ENCODE measurements at regions of chr14 and their contacts with region 1.

Region 1: DNA sequence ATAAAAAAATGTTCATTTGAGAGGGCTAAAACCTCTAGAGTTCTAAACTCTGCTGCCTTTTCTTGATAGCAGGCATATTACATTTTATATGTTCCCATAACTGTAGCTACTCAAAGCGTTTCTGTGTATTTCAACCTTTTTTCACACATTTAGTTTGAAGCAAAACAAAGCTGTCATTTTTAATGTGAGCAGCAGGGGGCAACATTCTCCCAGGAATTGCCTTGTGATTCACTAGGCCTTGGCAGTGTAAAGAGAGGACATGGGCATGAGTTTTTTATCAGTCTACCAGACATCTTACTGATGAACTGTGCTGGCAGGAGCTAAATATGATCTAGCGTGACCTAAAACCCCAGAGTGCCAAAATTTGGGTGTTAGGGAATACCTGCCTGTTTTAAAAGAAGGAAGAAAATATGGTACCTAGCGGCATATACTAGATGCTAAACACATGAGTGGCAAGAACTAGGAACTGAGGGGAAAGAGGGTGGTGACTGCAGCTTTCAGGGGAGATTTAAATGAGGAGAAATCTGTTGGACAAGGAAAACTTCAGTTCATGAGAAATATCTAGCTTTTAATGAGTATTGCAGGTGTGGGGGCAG is 65.3 kb downstream of the IFT43 start:
- DNase-seq: peak in 1 of 3 donors; percentile 75
- ATAC-seq: peak; percentile 65
- H3K4me3 ChIP-seq: no peak overlapping the region
- H3K4me1 ChIP-seq: no peaks in the 10 kb centered on the region
- CTCF ChIP-seq: peak; percentile 31

Region 2: DNA sequence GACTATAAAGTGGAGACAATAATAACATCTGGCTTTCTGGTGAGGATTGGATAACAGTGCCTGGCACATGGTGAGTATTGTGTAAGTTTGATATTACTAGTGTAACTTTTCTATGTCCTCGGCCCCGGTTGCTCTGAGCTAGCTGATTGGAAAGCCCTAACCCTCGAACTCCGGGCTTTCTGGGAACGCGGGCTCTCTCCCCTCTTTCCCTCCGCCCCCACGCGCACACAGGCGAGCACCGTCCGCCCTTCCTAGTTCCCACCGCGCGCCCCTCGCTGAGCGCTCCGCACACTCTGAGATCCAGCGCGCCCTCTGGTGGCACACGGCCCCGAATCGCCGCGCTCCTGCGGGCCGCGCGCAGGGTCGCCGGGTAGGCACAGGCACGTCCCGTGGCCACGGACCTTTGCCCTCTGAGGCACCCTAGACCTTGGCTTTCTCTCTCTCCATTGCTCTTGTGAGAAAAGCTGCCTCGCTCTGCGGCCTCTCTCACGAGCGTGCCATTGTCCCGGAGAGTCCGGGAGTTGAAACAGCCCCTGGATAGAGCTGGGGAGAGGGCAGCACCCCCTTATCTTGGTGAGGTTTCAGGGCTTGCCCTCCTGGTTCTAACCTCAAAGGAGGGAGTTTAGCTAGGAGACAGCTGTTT is 301.9 kb after region 1 on chr14:
- intact Hi-C with region 1: loop called (anchors 10 kb)
- DNase-seq: peak in 2 of 3 donors; percentile 55 to 63
- ATAC-seq: peak; percentile 67
- H3K4me3 ChIP-seq: no peak overlapping the region
- H3K4me1 ChIP-seq: no peaks in the 10 kb centered on the region
- CTCF ChIP-seq: peak; percentile 35

Region 3: DNA sequence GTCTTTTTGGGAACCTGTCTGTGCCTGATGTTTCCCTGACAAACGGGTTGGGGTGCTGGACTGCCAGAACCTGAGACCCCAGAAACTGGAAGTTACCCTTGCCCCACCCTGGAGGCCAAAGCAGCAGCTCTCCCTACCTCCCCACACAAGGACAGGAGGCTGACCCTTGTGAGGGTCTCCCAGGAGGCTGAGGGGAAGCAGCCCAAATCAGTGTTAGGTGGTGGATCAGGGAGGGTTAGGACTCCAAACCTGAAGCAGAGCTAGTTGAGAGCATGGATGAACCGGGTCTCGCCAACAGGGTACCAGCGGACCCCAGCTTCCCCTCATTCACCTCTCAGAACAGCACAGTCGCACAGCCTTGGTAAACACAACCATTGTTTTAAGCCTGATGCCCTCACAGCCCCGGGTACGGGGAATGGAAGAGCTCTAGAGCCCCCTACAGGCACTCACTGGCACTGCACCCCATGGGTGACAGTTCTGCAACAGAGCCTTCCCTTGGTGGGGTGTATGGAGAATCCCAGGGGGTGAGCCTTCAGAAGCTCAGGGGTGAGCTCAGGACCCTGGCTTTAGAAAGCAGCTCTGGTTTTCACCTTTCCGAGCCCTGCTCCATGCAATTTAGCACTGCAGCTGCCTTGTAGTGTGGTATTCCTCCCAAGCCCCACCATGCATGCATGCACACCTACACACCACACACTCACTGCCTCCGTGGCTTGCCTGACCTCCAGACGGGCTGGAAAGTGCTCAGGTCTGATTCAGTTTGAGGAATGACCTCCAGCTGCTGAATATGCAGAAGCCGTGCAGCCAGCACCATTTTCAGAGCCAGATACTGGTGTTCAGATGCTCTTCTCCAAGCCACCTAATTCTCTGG is 336.3 kb after region 1 on chr14:
- intact Hi-C with region 1: loop called in 1 of 2 experiments (anchors 10 kb)
- DNase-seq: peak in 2 of 3 donors; percentile 67 to 73
- ATAC-seq: peak; percentile 93
- H3K4me3 ChIP-seq: no peak overlapping the region
- H3K4me1 ChIP-seq: no peaks in the 10 kb centered on the region
- CTCF ChIP-seq: peak; percentile 88

Region 4: GRCh38 chr14:76486251-76486743 is 435.4 kb after region 1 on chr14:
- intact Hi-C with region 1: no loop called
- DNase-seq: no peak
- ATAC-seq: no peak
- H3K4me3 ChIP-seq: no peak overlapping the region
- H3K4me1 ChIP-seq: no peaks in the 10 kb centered on the region
- CTCF ChIP-seq: no peak

Region 5: GRCh38 chr14:76654573-76655090 is 603.7 kb after region 1 on chr14:
- intact Hi-C with region 1: loop called in 1 of 2 experiments (anchors 10 kb)
- DNase-seq: peak in 1 of 3 donors; percentile 5
- ATAC-seq: no peak
- H3K4me3 ChIP-seq: no peak overlapping the region
- H3K4me1 ChIP-seq: no peaks in the 10 kb centered on the region
- CTCF ChIP-seq: no peak